ENCODE measurements at regions of chr12 and their contacts with region 1.

Region 1: DNA sequence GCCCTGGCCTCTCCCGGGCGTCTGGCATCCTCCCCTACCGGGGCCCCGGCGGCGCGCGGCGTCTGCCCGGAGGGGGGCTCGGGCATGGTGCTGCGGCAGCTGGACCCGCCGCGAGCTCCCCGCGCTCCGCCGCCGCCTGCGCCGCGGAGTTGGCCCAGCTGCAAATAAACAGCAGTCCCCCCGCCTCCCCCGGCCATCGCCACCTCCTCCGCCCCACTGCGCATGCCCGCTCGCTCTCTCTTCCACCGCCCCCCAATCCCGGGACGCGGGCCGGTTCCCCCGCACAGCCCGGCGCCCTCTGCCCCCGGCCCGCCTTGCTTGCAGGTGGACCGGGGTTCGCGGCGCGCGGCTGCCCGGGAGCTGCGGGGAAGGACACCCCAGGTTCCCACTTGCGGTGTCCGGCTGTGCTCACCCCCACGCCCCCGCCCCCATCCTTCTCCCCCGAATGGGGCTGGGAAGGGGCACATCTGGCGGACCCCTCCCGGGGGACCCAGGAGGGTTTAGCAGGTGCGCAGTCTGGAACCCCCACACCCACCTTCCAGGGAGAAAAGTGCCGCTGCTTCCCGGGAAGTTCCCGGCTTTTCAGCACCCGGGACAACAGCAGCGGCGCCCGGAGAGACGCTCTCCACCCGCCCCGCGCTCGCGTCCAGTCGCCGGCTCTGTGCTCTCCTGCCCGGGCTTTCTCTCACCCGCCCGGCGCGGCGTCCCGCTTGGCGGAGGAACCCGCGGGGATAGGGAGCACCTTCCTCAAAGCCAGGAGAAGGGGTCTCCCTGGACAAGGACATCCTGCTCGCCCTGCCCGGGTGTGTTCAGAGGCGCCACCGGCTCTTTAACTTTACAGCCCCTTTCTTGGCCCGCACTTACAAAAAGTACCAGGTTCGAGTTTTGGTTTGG is at the start of gene TMTC1:
- DNase-seq: peak in 1 of 2 donors; percentile 56
- H3K4me3 ChIP-seq: peak within 1 kb of the TSS; percentile 52 to 81 (median 68)
- H3K27ac ChIP-seq: peak within 1 kb of the TSS; percentile 73 to 88
- H3K4me1 ChIP-seq: peaks cover 0 to 6% of the 10 kb centered on the region in 2 donors
- H3K27me3 ChIP-seq: peaks cover 0 to 23% of the 10 kb centered on the region in 2 donors
- CTCF ChIP-seq: no peak
- POLR2A ChIP-seq: no peak
- total RNA-seq, gene TMTC1: 49.9 to 87.2 (median 71.8) TPM

Region 2: DNA sequence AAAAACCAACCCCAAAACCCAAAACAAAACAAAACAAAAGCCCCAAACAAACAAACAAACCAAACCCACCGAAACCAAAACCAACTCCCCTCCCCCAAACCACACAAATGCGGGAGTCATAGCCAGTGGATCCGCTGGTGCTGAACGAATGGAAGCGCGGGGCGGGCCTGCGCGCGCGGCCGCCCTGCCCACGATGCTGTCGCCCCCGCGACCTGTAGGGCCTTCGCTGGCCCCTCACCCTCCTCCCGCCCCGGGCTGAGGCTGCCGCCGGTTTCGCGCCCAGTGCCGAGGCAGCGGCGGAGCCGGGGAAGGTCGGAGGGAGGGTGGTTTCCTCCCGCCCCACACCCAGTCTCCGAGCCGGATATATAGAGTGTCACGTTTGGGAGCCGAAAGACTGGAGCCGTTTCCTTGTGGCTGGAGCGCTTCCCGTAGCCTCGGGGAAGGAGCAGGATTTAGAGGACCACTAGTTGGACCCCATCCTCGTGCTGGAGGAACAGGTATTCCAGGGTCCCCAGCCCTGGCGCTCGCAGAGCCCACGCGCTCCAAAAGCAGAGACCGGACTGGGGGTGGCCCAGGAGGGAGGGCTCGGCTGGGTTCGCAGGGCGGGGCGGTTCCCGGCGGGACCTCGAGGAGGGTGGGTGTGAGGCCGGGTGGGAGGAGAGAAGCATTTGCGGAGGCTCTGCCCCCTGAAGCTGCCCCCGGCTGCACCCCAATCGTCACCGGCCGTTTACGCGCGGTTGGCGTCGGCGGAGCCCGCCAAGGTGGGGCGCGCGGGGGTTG is 634.9 kb before region 1 on chr12 and contains the start of gene FAR2:
- intact Hi-C with region 1: no loop called
- DNase-seq: no peak
- H3K4me3 ChIP-seq: peak within 1 kb of the TSS; percentile 63 to 96 (median 80)
- H3K27ac ChIP-seq: peak within 1 kb of the TSS; percentile 80 to 92
- H3K4me1 ChIP-seq: peaks cover 6 to 9% of the 10 kb centered on the region in 2 donors
- H3K27me3 ChIP-seq: no peaks in the 10 kb centered on the region
- CTCF ChIP-seq: no peak
- POLR2A ChIP-seq: no peak
- total RNA-seq, gene FAR2: 8.2 to 18.2 (median 9.8) TPM

Region 3: DNA sequence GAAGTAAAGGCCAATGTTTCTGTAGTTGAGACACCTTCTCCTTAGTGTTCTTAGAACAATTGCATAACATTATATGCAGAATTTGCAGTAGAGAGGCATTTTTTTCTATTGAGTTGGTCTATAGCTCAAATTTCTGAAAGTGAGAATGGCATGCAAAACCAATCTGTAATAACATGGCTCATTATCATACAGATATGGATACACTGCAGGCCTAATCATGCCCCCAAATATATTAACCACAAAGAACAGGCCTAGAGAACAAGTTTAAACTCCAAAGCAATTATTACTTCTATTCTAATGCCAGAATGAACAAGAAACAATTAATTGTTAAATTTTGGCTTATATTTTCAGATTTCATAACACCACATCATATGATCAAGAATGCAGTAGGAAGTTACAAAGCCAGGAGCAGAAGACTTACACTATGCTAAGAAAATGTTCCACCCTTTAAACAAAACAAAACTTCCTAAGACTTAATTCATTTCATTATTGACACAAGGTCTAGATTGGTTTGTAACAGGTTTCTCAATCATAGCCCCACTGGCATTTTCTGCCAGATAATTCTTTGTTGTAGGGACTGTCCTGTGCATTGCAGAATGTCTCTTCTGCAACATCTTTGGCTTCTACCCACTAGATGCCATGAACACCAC is 27.2 kb before region 1 on chr12:
- intact Hi-C with region 1: loop called (anchors 2 kb)
- DNase-seq: no peak
- H3K4me3 ChIP-seq: no peak overlapping the region
- H3K27ac ChIP-seq: peak overlapping the region in 1 of 2 donors; percentile 48
- H3K4me1 ChIP-seq: no peaks in the 10 kb centered on the region
- H3K27me3 ChIP-seq: no peaks in the 10 kb centered on the region
- CTCF ChIP-seq: no peak
- POLR2A ChIP-seq: no peak